Activated T-helper 1 cell treated with anti-CD3 and anti-CD28 coated beads, Interleukin-12 subunit alpha, Interleukin-12 subunit beta, Interleukin-2, Interleukin-4 antibody, amounts not matched to agents 30 ng/mL and 10 ng/mL and 1 ng/mL, durations not matched to agents 14 hours and 24 hours and 36 hours (primary cell): ENCODE measurements at regions of chr18 and their contacts with region 1.

Region 1: DNA sequence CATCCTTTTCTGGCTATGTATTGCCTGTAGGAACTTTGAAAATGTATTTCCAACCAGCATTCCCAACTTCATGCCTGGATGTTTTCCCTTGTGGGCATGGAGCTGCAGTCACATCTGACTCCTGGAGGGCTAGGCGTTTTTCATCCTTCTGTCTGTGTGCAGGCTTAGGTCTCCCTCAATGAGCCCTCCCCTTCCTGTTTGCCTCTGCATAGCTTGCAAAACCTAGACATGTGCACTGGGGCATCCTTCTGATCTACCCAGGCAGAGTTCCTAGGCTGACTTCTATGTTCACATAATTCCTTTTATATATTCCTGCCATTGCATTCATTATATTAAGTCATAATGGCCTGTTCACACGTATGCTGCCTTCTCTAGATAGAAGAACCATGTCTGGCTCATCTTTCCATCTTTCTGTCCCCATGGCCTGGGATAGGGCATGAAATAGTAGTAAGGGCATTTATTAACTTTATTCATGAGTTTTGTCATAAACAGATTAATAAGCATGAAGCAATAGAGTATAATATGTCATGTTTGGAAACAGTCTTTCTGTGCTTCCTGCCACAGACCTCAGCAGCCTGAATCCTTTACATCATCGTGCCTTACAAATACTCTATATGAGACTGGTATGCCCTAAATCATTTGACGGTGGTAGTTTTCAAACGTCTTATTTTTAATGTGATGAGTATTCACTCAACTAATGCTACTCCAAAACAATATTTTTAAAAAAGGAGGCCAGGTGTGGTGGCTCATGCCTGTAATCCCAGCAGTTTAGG is 195.6 kb downstream of the TGIF1 start:
- DNase-seq: no peak
- H3K4me3 Mint-ChIP-seq: no peak overlapping the region
- H3K27ac Mint-ChIP-seq: no peak overlapping the region
- H3K4me1 Mint-ChIP-seq: peaks cover 49% of the 10 kb centered on the region
- H3K27me3 Mint-ChIP-seq: no peaks in the 10 kb centered on the region

Region 2: DNA sequence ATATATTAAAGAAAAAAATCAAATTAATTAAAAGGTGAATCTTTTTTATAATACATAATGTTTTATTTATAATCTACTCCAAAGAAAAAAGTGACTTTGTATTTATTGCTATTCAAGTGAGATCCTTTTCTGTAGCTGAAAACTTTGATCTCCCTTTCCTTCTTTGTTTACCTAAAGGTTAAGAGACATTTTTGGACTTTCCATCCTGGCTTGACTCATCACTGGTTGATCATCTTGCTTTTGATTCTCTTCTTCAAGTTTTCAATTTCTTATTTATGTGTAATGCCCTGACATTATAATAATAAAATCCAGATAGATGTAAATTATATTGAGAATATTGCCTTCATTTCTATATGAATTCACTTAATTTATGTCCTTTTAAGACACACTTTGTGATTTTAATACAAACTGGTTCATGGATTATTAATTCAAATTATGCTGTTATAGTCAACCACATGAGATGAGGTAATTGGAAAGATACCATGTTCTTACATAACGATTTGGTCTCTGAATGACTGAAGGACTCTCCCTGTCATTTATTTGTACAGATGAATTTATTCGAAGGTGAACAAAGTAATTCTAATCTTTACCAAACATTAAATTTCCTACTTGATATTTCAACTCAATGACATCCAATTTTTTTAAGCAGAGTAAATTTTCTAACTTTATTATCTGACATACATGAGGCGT is 11.2 kb before region 1 on chr18:
- intact Hi-C with region 1: loop called (anchors 1 kb)
- DNase-seq: no peak
- H3K4me3 Mint-ChIP-seq: no peak overlapping the region
- H3K27ac Mint-ChIP-seq: peak overlapping the region; percentile 62
- H3K4me1 Mint-ChIP-seq: peaks cover 22% of the 10 kb centered on the region
- H3K27me3 Mint-ChIP-seq: no peaks in the 10 kb centered on the region